A549 (cell line): ENCODE measurements at regions of chr9 and their contacts with region 1.

Region 1: GRCh38 chr9:21415492-21416267 is 6.8 kb downstream of the IFNA8 start:
- DNase-seq: peak in 1 of 2 experiments; percentile 39
- ATAC-seq: peak in 1 of 2 experiments; percentile 45; a peak in 3 of 6 replicates
- H3K4me3 ChIP-seq: no peak overlapping the region
- H3K27ac ChIP-seq: peak overlapping the region; percentile 31 to 62; a peak in 4 of 6 replicates
- H3K4me1 ChIP-seq: peaks cover 24% of the 10 kb centered on the region
- CTCF ChIP-seq: no peak
- EP300 ChIP-seq: no peak
- POLR2A ChIP-seq: no peak
- RAD21 ChIP-seq: no peak

Region 2: DNA sequence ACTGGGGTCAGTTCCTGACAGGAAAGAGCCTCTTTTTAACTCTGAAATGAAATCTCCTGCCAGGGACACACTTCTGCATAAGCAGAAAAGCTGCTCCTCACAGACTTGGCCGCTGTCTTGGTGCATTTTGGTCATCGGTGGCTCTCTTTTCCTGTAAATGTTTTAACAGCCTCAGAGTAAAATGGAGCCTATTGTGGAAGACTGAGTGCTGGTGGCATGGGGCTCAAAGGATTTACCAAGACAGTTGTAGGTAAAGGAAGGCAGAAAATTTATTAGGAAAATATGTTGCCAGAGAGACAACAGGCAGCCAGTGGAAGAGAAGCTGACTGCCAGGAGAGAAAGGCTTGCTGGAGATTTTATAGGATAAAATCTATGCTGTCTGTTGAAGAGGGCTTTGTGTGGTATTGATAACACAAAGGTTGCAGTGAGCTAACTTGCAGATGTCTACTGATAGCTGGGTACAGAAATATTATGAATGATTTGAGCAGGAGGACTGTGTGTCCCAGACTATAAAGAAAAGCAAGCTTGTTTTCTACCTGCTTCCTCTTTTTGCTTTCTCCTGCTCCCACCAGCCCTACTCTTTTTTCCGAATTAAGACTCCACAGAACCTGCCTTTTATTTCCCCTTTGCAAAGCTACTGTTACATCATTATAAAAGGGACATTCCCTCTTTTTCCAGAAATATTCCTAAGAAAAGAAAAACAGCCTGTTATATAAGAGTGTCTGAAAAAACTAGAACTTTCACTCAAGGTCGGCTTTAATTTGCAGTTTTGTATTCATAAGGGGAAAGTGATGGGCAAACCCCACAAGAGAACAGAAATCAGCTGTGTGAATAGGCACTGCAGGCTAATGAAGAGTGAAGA is 148.0 kb before region 1 on chr9:
- CTCF ChIA-PET with region 1: no interaction called
- POLR2A ChIA-PET with region 1: no interaction called
- DNase-seq: no peak
- ATAC-seq: no peak
- H3K4me3 ChIP-seq: no peak overlapping the region
- H3K27ac ChIP-seq: no peak overlapping the region
- H3K4me1 ChIP-seq: no peaks in the 10 kb centered on the region
- CTCF ChIP-seq: no peak
- EP300 ChIP-seq: no peak
- POLR2A ChIP-seq: no peak
- RAD21 ChIP-seq: no peak

Region 3: DNA sequence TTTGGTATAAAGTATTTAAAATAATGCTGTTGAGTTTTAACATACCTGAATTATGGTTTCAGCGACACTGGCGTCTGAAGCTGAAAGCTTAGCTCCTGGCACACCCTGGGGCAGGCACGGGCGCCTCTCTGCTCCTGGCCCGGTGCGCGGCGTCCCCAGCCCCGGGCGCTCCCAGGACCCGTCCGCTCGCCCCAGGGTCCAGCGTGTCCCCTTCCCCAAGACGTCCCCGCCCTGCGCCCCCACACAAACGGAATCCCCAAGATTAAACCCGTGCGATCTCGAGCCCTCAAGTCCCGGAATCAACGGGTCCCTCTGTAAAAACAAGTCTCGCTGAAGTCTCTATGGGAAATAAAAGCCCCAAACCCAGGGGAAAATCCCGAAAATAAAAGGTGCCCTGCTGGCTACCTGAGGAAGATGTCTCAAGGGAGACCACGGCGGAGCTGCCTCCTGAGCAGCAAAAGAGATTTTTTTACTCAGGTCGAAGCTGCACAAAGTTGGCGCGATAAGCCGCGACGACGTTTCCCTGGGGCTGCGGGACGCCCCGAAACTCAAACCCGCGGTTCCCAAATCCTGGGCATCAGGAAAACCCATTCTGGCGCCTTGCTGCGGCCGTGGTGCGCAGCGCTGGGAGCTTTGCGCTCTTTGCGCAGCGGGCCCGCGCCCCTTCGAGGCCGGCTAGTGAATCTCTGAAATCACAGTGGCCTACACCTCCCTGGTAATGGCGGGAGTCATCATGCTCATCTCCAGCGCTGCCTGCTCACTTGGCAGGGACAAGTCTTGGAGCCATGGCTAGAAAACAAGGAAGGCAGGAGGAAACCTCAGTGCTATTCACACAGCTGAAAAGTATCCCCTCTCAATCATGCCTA is 13.1 kb before region 1 on chr9:
- CTCF ChIA-PET with region 1: no interaction called
- POLR2A ChIA-PET with region 1: no interaction called
- DNase-seq: peak; percentile 33 to 48
- ATAC-seq: peak; percentile 90 to 97
- H3K4me3 ChIP-seq: peak overlapping the region; percentile 52
- H3K27ac ChIP-seq: peak overlapping the region in 1 of 2 experiments; percentile 55; a peak in 3 of 6 replicates
- H3K4me1 ChIP-seq: no peaks in the 10 kb centered on the region
- CTCF ChIP-seq: no peak
- EP300 ChIP-seq: no peak
- POLR2A ChIP-seq: no peak
- RAD21 ChIP-seq: peak; percentile 5 to 32; a peak in 2 of 5 replicates

Region 4: DNA sequence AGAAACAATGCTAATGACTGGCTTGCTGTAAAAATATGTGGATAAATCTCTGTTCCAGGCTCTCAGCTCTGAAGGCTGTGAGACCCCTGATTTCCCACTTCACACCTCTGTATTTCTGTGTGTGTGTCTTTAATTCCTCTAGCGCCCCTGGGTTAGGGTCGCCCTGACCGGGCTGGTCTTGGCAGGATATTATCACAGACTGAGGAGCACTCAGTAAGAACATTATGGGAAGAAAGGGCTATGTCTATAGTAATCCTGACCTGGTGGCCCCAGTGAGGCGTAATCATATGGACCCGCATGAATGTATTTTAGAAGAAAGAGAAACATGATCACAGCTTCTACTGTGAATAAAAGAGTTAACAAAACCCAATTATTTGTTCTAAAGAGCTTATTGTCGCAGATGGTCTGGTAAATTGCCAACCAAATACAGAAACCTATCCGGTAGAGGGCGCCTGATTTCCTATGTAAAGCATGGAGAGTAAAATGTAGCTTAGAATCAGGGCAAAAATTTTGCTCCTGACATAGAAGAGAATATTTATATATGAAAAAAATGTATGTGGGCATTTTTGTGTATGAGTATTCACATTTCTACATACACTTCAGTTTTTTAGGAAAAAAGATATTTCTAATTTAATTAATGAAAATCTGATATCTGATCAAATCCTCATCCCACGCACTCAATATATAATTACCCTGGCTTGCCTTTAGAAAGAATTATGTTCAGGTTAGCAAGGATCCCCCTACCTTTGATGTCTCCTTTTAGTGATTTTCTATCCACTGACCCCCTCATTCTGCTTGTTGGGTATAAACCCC is 18.7 kb after region 1 on chr9:
- CTCF ChIA-PET with region 1: interaction called, 27 read pairs
- POLR2A ChIA-PET with region 1: no interaction called
- DNase-seq: peak; percentile 28 to 77
- ATAC-seq: peak; percentile 65 to 84; a peak in 4 of 6 replicates
- H3K4me3 ChIP-seq: no peak overlapping the region
- H3K27ac ChIP-seq: no peak overlapping the region
- H3K4me1 ChIP-seq: no peaks in the 10 kb centered on the region
- CTCF ChIP-seq: peak; percentile 86
- EP300 ChIP-seq: no peak
- POLR2A ChIP-seq: no peak
- RAD21 ChIP-seq: peak; percentile 70 to 74

Region 5: GRCh38 chr9:21831961-21832509 is 416.4 kb after region 1 on chr9:
- CTCF ChIA-PET with region 1: no interaction called
- POLR2A ChIA-PET with region 1: no interaction called
- DNase-seq: peak; percentile 67 to 88
- ATAC-seq: peak; percentile 89 to 96
- H3K4me3 ChIP-seq: no peak overlapping the region
- H3K27ac ChIP-seq: peak overlapping the region; percentile 85 to 90
- H3K4me1 ChIP-seq: peaks cover 52% of the 10 kb centered on the region
- CTCF ChIP-seq: no peak
- EP300 ChIP-seq: peak; percentile 27 to 71; a peak in 2 of 5 replicates
- POLR2A ChIP-seq: no peak
- RAD21 ChIP-seq: no peak